Activated CD4-positive, alpha-beta memory T cell treated with anti-CD3 and anti-CD28 coated beads for 36 hours (primary cell): ENCODE measurements at regions of chr2 and their contacts with region 1.

Region 1: GRCh38 chr2:69436938-69437750 is at the start of gene NFU1:
- DNase-seq: peak; percentile 94
- H3K4me3 Mint-ChIP-seq: peak within 1 kb of the TSS; percentile 95
- H3K27ac Mint-ChIP-seq: peak within 1 kb of the TSS; percentile 91
- H3K4me1 Mint-ChIP-seq: peaks cover 24% of the 10 kb centered on the region
- H3K27me3 Mint-ChIP-seq: no peaks in the 10 kb centered on the region
- total RNA-seq, gene NFU1: 37.8 to 44.5 TPM

Region 2: DNA sequence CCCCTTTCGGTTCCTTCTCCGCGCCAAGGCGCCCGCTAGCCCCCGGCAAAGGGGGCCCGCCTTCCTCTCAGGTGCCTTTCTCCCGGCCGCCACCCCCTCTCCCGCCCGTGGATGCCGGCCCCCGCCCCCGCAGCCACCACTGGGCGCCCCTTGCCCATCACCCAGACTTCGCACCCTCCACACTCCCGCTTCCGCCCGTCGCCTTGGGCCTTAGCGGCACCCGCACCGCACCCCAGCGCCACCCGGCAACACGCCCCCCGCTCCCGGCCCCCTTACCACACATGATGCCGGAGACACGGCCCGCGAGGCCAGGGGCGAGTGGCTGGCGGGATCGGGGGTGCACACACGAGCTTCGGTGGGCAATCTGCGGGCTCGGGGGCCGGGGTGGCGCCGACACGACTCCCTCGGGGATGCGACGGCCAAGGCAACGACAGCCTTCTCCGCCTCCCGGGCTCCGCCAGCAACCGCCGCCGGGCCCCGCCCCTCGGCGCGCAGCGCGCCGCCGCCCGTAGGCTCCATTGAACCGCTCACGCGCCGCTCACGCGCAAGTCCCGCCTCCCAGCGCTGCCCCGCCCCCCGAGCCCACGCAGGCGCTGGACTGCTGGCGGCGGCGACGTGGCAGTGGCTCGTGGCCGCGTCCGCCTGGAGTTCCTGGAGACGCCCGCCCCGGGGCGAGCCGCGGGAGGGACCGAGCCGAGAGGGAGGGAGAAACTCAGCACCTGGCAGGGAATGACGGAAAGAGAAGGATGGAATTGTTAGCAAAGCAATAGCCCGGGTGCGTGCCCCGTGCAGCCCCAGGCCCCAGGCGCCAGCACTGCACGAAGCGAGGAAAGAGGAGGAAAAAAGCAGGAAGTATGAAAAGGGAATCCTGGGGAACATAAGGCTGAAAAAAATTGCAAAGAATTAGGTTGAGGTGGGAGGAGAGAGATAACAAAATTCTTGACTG is 50.1 kb before region 1 on chr2 and contains the start of gene GFPT1:
- CTCF ChIA-PET with region 1: interaction called, 7 read pairs
- POLR2A ChIA-PET with region 1: interaction called, 6 read pairs
- intact Hi-C with region 1: loop called (anchors 1 kb)
- DNase-seq: peak; percentile 95
- H3K4me3 Mint-ChIP-seq: peak within 1 kb of the TSS; percentile 85
- H3K27ac Mint-ChIP-seq: peak within 1 kb of the TSS; percentile 80
- H3K4me1 Mint-ChIP-seq: peaks cover 39% of the 10 kb centered on the region
- H3K27me3 Mint-ChIP-seq: no peaks in the 10 kb centered on the region
- total RNA-seq, gene GFPT1: 39.8 to 43.6 TPM

Region 3: DNA sequence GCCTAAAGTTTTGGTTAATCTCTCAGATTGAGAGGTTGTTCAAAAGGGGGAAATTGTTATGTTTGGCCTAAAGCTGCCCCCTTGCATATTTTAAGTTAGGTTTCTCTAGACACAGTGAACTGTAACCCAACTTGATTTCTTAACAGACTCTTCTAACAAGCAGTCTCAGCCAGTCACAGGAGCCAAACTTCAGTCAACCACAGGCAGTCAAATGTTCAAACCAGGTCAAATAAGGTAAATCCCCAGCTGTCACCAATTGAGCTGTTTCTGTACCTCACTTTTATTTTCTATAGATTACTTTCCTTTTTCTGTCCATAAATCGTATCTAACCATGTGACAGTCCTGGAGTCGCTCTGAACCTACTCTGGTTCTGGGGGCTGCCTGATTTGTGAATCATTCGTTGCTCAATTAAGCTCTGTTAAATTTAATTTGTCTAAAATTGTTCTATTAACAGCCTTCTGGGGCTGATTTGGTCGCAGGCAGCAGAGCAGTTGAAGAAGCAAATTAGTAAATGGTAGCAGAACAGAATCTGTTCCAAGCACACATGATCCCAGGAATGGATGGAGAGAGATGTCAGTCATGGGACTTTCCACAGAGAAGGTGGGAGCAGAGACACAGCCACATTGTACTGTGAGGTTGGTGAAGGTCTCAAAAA is 16.5 kb after region 1 on chr2:
- CTCF ChIA-PET with region 1: interaction called, 6 read pairs
- POLR2A ChIA-PET with region 1: interaction called, 10 read pairs
- intact Hi-C with region 1: loop called (anchors 1 kb)
- DNase-seq: peak; percentile 57
- H3K4me3 Mint-ChIP-seq: no peak overlapping the region
- H3K27ac Mint-ChIP-seq: no peak overlapping the region
- H3K4me1 Mint-ChIP-seq: peaks cover 22% of the 10 kb centered on the region
- H3K27me3 Mint-ChIP-seq: no peaks in the 10 kb centered on the region

Region 4: DNA sequence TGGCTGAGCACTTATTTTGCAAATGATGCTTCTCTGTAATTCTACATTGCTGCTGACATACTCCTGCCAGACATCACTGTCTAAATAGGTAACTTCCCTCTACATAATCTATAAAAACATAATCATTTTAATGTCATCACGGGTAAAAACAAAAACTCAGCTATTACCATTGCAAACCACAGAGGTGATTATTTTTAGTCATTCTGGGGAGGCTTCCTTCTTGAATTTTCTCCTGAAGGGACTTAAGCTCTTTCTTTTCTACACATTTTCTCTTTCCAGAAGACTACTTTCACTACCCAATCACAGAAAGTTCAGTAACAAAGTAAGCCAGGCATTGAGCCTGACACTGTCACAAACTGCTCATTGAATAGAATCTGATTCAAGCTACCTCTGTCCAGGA is 40.5 kb after region 1 on chr2:
- CTCF ChIA-PET with region 1: interaction called, 3 read pairs
- POLR2A ChIA-PET with region 1: interaction called, 3 read pairs
- intact Hi-C with region 1: loop called (anchors 2 kb)
- DNase-seq: no peak
- H3K4me3 Mint-ChIP-seq: no peak overlapping the region
- H3K27ac Mint-ChIP-seq: peak overlapping the region; percentile 0
- H3K4me1 Mint-ChIP-seq: peaks cover 44% of the 10 kb centered on the region
- H3K27me3 Mint-ChIP-seq: no peaks in the 10 kb centered on the region

Region 5: DNA sequence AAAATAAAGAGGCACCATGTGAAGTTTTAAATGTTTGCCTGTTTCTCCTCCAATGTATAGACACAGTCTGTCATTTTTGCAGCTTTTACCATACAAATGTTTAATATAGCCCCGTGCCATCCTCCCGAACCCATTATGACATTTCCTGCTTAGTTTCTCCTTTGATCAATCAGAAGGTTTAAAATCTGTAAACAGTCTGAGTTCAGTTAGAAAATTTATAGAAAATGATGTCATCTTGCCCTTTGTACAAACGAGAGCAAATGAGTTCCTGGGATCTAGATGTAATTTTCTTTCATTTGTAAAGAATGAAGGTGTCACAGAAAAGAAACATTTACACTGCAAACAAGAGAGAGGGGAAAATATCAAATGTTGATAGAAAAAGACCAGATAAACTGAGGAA is 62.8 kb after region 1 on chr2:
- CTCF ChIA-PET with region 1: interaction called, 3 read pairs
- POLR2A ChIA-PET with region 1: interaction called, 4 read pairs
- intact Hi-C with region 1: loop called (anchors 2 kb)
- DNase-seq: no peak
- H3K4me3 Mint-ChIP-seq: no peak overlapping the region
- H3K27ac Mint-ChIP-seq: peak overlapping the region; percentile 44
- H3K4me1 Mint-ChIP-seq: peaks cover 29% of the 10 kb centered on the region
- H3K27me3 Mint-ChIP-seq: no peaks in the 10 kb centered on the region

Region 6: DNA sequence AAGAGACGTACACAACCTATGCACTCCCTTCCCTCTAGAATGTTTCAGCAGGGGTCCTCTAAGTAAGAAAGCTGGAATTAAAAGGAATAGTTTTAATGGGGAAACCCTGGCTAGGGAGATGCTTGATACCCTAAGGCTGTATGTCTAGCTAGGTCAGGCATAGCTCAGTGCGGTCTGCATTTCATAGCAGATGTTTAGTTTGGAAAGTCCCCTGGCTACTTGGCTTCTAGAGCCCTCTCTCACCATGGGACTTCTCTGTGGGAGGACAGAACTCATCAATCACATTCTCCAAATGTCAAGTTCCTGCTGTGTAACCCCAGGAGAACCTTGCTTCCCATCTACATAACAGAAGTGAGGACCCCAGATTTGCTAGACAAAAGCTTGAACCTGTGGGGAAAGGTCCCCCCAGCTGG is 280.7 kb after region 1 on chr2:
- CTCF ChIA-PET with region 1: interaction called, 6 read pairs
- POLR2A ChIA-PET with region 1: no interaction called
- intact Hi-C with region 1: loop called (anchors 10 kb)
- DNase-seq: no peak
- H3K4me3 Mint-ChIP-seq: no peak overlapping the region
- H3K27ac Mint-ChIP-seq: no peak overlapping the region
- H3K4me1 Mint-ChIP-seq: peaks cover 14% of the 10 kb centered on the region
- H3K27me3 Mint-ChIP-seq: no peaks in the 10 kb centered on the region

Region 7: DNA sequence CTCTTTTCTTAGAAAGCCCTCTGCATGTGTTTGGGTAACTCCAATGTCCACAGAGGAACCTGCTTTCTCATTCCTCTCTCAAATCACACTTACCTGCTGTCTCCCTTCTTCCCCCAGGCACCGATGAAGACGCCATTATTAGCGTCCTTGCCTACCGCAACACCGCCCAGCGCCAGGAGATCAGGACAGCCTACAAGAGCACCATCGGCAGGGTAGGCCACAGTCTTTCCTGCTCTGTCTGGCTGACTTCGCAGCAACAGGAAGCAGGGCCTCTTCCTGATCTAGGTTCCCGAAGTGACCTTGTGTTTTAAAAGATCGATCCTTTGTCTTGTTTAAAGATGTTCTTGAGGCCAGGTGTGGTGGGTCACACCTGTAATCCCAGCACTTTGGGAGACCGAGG is 367.3 kb after region 1 on chr2:
- CTCF ChIA-PET with region 1: no interaction called
- POLR2A ChIA-PET with region 1: no interaction called
- intact Hi-C with region 1: no loop called
- DNase-seq: peak; percentile 11
- H3K4me3 Mint-ChIP-seq: no peak overlapping the region
- H3K27ac Mint-ChIP-seq: no peak overlapping the region
- H3K4me1 Mint-ChIP-seq: peaks cover 13% of the 10 kb centered on the region
- H3K27me3 Mint-ChIP-seq: no peaks in the 10 kb centered on the region

Region 8: GRCh38 chr2:69829256-69830046 is 392.3 kb after region 1 on chr2 and contains the start of gene GMCL1:
- CTCF ChIA-PET with region 1: no interaction called
- POLR2A ChIA-PET with region 1: interaction called, 3 read pairs
- intact Hi-C with region 1: loop called (anchors 1 kb)
- DNase-seq: peak; percentile 99
- H3K4me3 Mint-ChIP-seq: peak within 1 kb of the TSS; percentile 81
- H3K27ac Mint-ChIP-seq: peak within 1 kb of the TSS; percentile 92
- H3K4me1 Mint-ChIP-seq: peaks cover 40% of the 10 kb centered on the region
- H3K27me3 Mint-ChIP-seq: no peaks in the 10 kb centered on the region
- total RNA-seq, gene GMCL1: 20.6 to 22.1 TPM